ENCODE measurements at regions of chr7 and their contacts with region 1.

Region 1: DNA sequence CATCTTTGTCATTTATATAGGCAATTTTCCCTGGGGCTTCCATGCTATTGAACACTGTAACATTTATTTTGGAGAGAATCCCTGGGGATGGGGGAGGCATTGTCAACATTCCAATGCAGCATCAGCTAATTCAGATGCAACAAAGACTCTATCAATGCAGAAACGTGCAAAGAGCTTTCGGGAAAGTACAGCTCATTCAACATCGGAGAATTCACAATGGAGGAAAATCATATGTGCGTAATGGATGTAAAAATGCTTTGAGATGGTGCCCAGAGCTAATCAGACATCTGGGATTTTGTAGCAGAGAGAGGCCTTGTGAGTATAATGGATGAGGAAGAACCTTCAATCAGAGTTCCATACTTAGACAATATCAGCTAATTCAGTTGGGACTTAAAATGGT is 28.3 kb upstream of the FIS1 start:
- DNase-seq: no peak
- H3K4me3 ChIP-seq: no peak overlapping the region
- CTCF ChIP-seq: no peak

Region 2: DNA sequence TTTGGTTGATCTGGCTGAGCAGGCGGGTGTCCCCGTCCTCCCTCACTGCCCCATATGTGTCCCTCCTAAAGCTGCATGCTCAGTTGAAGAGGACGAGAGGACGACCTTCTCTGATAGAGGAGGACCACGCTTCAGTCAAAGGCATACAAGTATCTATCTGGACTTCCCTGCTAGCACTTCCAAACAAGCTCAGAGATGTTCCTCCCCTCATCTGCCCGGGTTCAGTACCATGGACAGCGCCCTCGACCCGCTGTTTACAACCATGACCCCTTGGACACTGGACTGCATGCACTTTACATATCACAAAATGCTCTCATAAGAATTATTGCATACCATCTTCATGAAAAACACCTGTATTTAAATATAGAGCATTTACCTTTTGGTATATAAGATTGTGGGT is 214.9 kb before region 1 on chr7:
- in situ Hi-C with region 1: loop called (anchors 10 kb)
- DNase-seq: peak; percentile 15
- H3K4me3 ChIP-seq: no peak overlapping the region
- CTCF ChIP-seq: no peak

Measured in astrocyte of the cerebellum (primary cell).